ENCODE measurements at regions of chr3 and their contacts with region 1.

Region 1: GRCh38 chr3:42190701-42191462 is 75.1 kb downstream of the CCK start:
- DNase-seq: peak; percentile 77
- H3K4me3 ChIP-seq: no peak overlapping the region
- H3K27ac ChIP-seq: no peak overlapping the region
- H3K4me1 ChIP-seq: peaks cover 11% of the 10 kb centered on the region
- H3K27me3 ChIP-seq: no peaks in the 10 kb centered on the region
- CTCF ChIP-seq: peak; percentile 74 to 83
- POLR2A ChIP-seq: no peak

Region 2: DNA sequence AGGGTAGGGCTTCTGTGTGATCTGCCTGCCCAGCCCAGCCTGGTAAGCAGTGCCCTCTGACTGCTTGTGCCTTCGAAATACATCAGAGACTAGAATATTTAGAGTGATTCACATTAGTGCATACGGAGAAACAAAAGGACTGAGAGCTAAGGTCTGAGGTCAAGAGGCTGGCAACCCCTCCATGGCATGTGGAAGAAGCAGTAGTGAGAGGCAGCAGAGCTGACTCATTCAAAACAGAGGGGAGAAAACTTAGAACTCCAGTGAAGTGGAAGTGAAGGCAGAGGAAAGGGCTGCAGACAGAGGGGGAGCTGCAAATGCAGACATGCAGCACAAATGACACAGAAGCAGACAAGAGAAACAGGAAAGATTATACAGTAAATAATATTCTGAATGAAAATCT is 290.6 kb before region 1 on chr3:
- CTCF ChIA-PET with region 1: interaction called, 52 read pairs
- POLR2A ChIA-PET with region 1: no interaction called
- dilution Hi-C with region 1: no loop called
- intact Hi-C with region 1: no loop called
- DNase-seq: peak; percentile 68
- H3K4me3 ChIP-seq: no peak overlapping the region
- H3K27ac ChIP-seq: no peak overlapping the region
- H3K4me1 ChIP-seq: peaks cover 6% of the 10 kb centered on the region
- H3K27me3 ChIP-seq: no peaks in the 10 kb centered on the region
- CTCF ChIP-seq: no peak
- POLR2A ChIP-seq: no peak

Region 3: DNA sequence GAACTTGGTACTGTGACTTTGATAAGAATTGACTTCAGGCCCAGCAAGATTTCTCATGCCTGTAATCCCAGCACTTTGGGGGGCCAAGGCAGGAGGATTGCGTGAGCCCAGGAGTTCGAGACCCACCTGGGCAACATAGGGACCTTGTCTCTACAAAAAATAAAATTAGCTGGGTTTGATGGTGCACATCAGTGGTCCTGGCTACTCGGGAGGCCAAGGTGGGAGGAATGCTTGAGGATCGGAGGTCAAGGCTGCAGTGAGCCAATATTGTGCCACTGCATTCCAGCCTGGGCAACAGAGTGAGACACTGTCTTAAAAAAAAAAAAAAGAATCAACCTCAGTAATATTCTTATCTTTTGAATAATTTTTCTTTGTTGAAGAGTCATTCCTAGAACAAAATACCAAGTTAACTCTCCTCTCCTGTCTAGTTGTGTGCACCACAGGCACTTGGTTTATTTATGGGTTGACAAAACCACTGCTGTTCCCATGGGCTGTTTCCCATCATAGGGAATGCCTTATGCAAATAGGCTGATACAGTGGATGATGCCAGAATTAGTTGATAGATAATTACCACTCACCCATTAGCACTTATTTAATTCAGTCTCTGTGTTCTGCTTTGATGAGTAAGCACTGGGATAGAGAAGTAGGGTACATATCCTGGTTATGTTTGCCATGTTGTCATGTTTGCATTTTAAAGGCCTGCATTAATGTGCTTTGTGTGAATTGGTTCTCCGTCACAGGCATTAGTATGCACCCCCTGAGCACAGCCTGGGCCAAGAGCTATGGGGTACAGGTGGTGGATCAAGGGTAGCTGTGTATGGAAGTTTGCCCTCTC is 66.8 kb before region 1 on chr3:
- CTCF ChIA-PET with region 1: interaction called, 318 read pairs
- POLR2A ChIA-PET with region 1: interaction called, 13 read pairs
- dilution Hi-C with region 1: no loop called
- intact Hi-C with region 1: loop called (anchors 1 kb)
- DNase-seq: no peak
- H3K4me3 ChIP-seq: no peak overlapping the region
- H3K27ac ChIP-seq: no peak overlapping the region
- H3K4me1 ChIP-seq: peaks cover 28% of the 10 kb centered on the region
- H3K27me3 ChIP-seq: no peaks in the 10 kb centered on the region
- CTCF ChIP-seq: no peak
- POLR2A ChIP-seq: no peak

Region 4: DNA sequence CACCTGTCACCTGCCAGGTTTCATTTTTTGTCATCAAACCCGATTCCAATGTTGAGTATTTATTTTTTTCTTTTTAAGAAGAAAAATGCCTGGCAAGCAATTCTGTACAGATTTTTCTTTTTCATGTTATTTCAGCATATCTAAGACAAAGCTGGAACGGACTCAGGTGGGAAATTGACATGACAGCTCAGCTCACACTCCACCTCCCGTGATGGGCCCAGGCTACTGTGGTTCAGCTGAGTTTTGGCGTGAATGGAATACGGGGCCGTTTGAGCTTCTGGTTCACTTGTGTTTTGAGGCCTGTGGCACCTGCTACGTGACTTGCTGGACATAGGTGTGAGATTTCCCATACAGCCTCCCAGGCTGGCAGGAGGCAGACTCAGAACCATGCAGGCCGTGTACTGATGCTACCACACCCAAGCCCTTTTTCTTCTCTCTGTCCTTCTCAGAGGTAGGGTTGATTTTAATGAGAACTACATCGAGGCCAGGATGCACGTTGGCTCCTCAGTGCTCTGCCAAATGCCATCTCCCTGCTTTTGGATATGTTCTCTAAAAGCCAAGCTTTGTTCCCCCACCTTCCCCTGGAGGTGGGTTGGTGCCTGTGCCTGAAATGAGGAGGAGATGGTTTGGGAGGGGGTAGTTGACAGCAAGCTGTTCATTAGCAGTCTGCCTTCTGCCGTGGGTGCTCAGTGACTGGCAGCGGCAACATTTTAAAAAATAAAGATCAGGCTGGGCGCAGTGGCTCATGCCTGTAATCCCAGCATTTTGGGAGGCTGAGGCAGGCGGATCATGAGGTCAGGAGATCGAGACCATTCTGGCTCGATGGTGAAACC is 51.0 kb before region 1 on chr3:
- CTCF ChIA-PET with region 1: interaction called, 12 read pairs
- POLR2A ChIA-PET with region 1: no interaction called
- dilution Hi-C with region 1: no loop called
- intact Hi-C with region 1: no loop called
- DNase-seq: no peak
- H3K4me3 ChIP-seq: no peak overlapping the region
- H3K27ac ChIP-seq: no peak overlapping the region
- H3K4me1 ChIP-seq: no peaks in the 10 kb centered on the region
- H3K27me3 ChIP-seq: no peaks in the 10 kb centered on the region
- CTCF ChIP-seq: no peak
- POLR2A ChIP-seq: no peak

Region 5: GRCh38 chr3:42169579-42170120 is 21.2 kb before region 1 on chr3:
- CTCF ChIA-PET with region 1: interaction called, 13 read pairs
- POLR2A ChIA-PET with region 1: no interaction called
- dilution Hi-C with region 1: no loop called
- intact Hi-C with region 1: no loop called
- DNase-seq: no peak
- H3K4me3 ChIP-seq: no peak overlapping the region
- H3K27ac ChIP-seq: no peak overlapping the region
- H3K4me1 ChIP-seq: peaks cover 3% of the 10 kb centered on the region
- H3K27me3 ChIP-seq: no peaks in the 10 kb centered on the region
- CTCF ChIP-seq: no peak
- POLR2A ChIP-seq: no peak

Region 6: DNA sequence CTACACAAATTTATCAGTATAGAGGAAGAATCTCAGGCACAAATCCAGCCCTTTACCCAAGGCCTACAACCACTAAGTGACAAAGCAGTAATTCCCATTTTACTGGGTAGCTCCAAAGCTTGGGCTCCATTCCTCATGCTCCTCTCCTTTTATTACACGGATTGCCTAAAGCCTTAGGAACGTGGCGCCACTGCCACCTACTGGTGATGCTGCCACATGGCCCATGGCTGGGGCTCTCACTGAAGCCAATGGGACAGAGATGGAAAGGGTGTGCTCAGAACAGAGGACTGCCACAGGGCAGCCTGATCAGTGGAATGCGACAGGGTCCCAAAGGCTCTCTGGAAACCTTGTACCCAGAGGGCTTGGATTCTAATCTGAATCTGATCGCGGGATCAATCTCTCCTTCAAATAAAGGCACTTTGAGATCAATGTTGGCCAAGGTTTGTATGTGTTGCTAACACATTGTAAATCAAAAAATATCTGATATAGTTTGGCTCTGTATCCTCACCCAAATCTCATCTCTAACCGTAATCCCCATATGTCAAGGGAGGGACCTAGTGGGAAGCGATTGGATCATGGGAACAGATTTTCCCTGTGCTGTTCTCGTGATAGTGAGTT is 253.0 kb after region 1 on chr3:
- CTCF ChIA-PET with region 1: interaction called, 11 read pairs
- POLR2A ChIA-PET with region 1: no interaction called
- dilution Hi-C with region 1: no loop called
- intact Hi-C with region 1: no loop called
- DNase-seq: peak; percentile 74
- H3K4me3 ChIP-seq: no peak overlapping the region
- H3K27ac ChIP-seq: no peak overlapping the region
- H3K4me1 ChIP-seq: no peaks in the 10 kb centered on the region
- H3K27me3 ChIP-seq: no peaks in the 10 kb centered on the region
- CTCF ChIP-seq: peak; percentile 95 to 98
- POLR2A ChIP-seq: no peak

Region 7: DNA sequence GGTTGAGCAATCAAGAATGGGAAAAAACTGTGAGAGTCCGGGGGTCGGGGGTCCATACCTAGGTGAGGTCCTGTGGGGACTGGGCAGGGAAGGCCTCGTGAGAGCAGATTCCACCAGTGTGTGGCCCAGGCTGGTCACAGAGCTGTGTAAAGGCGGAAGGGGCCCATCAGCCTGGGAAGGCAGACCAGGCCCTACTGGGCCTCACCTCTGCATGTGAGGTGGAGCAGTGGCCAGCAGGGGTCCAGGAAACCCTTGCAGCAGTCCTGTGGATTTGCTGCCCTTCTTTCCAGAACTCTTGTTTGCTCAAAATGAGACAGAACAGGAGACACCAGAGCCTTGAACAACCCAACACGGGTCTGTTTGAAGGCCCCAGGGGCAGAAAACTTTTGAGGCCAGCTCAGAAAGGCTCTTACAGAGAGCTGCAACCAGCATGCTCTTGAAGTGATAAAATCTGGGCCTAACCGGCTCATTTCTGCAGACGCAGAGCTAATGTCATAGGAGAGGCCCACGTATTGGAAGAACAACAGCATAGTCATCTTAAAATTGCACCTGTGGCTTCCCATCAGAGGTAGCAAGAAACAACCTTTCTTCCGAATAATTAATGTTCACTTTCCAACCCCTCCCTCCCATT is 542.1 kb after region 1 on chr3:
- CTCF ChIA-PET with region 1: no interaction called
- POLR2A ChIA-PET with region 1: no interaction called
- dilution Hi-C with region 1: no loop called
- intact Hi-C with region 1: no loop called
- DNase-seq: no peak
- H3K4me3 ChIP-seq: no peak overlapping the region
- H3K27ac ChIP-seq: no peak overlapping the region
- H3K4me1 ChIP-seq: no peaks in the 10 kb centered on the region
- H3K27me3 ChIP-seq: peaks cover 1 to 4% of the 10 kb centered on the region in 2 experiments
- CTCF ChIP-seq: peak in 1 of 2 donors; percentile 8
- POLR2A ChIP-seq: no peak